ENCODE measurements at regions of chr15 and their contacts with region 1.

Region 1: GRCh38 chr15:88657326-88658069 is 18.7 kb downstream of the ISG20 start:
- DNase-seq: peak; percentile 62 to 74 (median 70)
- ATAC-seq: peak; percentile 88
- H3K4me3 ChIP-seq: no peak overlapping the region
- H3K27ac ChIP-seq: no peak overlapping the region
- H3K4me1 ChIP-seq: no peaks in the 10 kb centered on the region
- H3K27me3 ChIP-seq: peaks cover 20 to 68% of the 10 kb centered on the region in 2 experiments; a peak in 4 of 5 replicates
- CTCF ChIP-seq: peak; percentile 83 to 91 (median 85)
- EP300 ChIP-seq: no peak
- POLR2A ChIP-seq: no peak
- RAD21 ChIP-seq: peak; percentile 73 to 88

Region 2: GRCh38 chr15:88701561-88702095 is 44.1 kb after region 1 on chr15:
- CTCF ChIA-PET with region 1: no interaction called
- POLR2A ChIA-PET with region 1: no interaction called
- in situ Hi-C with region 1: no loop called
- intact Hi-C with region 1: loop called (anchors 1 kb)
- DNase-seq: peak; percentile 42 to 49 (median 46)
- ATAC-seq: peak; percentile 91
- H3K4me3 ChIP-seq: no peak overlapping the region
- H3K27ac ChIP-seq: no peak overlapping the region
- H3K4me1 ChIP-seq: peaks cover 0 to 5% of the 10 kb centered on the region in 2 experiments; a peak in 1 of 5 replicates
- H3K27me3 ChIP-seq: peaks cover 32 to 46% of the 10 kb centered on the region in 2 experiments
- CTCF ChIP-seq: peak; percentile 65 to 75 (median 65)
- EP300 ChIP-seq: no peak
- POLR2A ChIP-seq: no peak
- RAD21 ChIP-seq: peak; percentile 36 to 67

Region 3: GRCh38 chr15:88834211-88834812 is 176.8 kb after region 1 on chr15:
- CTCF ChIA-PET with region 1: interaction called, 12 read pairs
- POLR2A ChIA-PET with region 1: interaction called, 3 read pairs
- in situ Hi-C with region 1: loop called (anchors 10 kb)
- intact Hi-C with region 1: loop called (anchors 1 kb)
- DNase-seq: peak; percentile 48 to 59 (median 55)
- ATAC-seq: peak; percentile 82
- H3K4me3 ChIP-seq: no peak overlapping the region
- H3K27ac ChIP-seq: no peak overlapping the region
- H3K4me1 ChIP-seq: peaks cover 0 to 8% of the 10 kb centered on the region in 2 experiments; a peak in 3 of 5 replicates
- H3K27me3 ChIP-seq: peaks cover 8 to 33% of the 10 kb centered on the region in 2 experiments; a peak in 4 of 5 replicates
- CTCF ChIP-seq: peak; percentile 76 to 87 (median 79)
- EP300 ChIP-seq: no peak
- POLR2A ChIP-seq: no peak
- RAD21 ChIP-seq: peak; percentile 84 to 91

Measured in K562 (cell line).